B cell (primary cell): ENCODE measurements at regions of chr20 and their contacts with region 1.

Region 1: DNA sequence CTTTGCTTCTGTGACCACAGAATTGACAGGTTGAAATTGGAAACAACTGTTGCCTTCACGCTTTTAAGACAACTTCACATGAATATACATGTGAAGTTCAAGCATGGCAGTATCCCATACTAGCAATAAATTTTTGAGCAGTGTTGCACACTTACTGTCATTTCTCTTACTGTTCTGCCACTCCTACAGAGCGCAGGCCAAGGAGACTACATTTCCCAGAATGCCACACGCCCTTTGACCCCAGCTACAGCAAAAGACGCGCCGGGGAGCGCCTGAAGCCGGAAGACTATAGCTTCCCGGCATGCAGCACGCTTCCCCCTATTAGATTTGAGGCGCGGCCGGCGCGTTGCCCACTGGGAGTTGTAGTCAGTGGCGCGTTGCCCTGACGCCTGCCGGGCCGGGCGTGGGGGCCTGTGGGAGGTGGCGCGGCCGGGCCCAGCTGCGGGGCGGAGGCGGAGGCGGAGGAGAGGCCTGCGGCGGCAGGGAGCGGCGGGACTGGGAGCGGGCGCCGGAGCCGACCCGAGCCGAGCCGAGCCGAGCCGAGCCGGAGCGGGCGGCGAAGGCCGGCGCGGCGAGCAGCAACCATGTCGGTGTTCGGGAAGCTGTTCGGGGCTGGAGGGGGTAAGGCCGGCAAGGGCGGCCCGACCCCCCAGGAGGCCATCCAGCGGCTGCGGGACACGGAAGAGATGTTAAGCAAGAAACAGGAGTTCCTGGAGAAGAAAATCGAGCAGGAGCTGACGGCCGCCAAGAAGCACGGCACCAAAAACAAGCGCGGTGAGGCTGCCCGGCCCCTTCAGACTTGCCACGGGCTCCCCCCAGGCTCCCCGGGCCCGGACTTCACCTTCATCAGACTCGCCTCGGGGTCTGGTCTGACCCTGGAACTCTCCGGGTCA is at the start of gene CHMP4B:
- DNase-seq: peak; percentile 98
- ATAC-seq: peak; percentile 96
- H3K4me3 ChIP-seq: peak within 1 kb of the TSS; percentile 86 to 97 (median 92)
- H3K4me3 Mint-ChIP-seq: peak within 1 kb of the TSS; percentile 97
- H3K27ac ChIP-seq: peak within 1 kb of the TSS; percentile 65 to 90
- H3K27ac Mint-ChIP-seq: peak within 1 kb of the TSS; percentile 96
- H3K4me1 ChIP-seq: peaks cover 23 to 30% of the 10 kb centered on the region in 2 donors
- H3K4me1 Mint-ChIP-seq: peaks cover 45% of the 10 kb centered on the region
- H3K27me3 ChIP-seq: no peaks in the 10 kb centered on the region
- H3K27me3 Mint-ChIP-seq: peaks cover 4% of the 10 kb centered on the region
- CTCF ChIP-seq: no peak
- total RNA-seq, gene CHMP4B: 81.6 and 83.9 TPM in 2 replicates

Region 2: DNA sequence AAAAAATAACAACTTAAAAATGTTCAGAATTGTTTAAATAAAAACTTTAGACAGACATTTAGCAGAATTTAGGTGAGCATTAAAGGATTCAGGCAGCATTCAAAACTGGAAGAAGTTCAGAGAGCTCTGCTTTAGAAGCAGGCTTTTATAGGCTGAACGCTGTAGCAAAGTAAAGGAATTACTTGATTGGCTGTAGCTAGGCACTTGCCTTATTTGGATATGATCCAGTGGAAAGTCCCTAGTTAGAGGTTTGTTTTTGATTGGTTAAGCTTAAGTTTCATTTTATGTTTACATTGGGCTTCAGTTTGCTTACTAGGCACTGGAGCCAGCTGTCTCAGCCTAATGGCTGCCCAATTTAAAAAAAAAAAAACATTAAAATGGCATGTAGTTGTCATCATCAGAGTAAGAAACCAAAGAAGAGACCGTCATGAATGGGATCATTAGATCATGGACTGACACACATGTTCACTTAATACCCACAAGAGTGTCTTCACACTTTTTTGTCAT is 256.2 kb before region 1 on chr20:
- CTCF ChIA-PET with region 1: no interaction called
- POLR2A ChIA-PET with region 1: no interaction called
- intact Hi-C with region 1: loop called (anchors 10 kb)
- DNase-seq: peak; percentile 90
- ATAC-seq: peak; percentile 96
- H3K4me3 ChIP-seq: peak overlapping the region in 2 of 5 experiments; percentile 24 to 40
- H3K4me3 Mint-ChIP-seq: peak overlapping the region; percentile 79
- H3K27ac ChIP-seq: peak overlapping the region; percentile 92 to 97
- H3K27ac Mint-ChIP-seq: peak overlapping the region; percentile 96
- H3K4me1 ChIP-seq: peaks cover 28 to 31% of the 10 kb centered on the region in 2 donors
- H3K4me1 Mint-ChIP-seq: peaks cover 34% of the 10 kb centered on the region
- H3K27me3 ChIP-seq: no peaks in the 10 kb centered on the region
- H3K27me3 Mint-ChIP-seq: no peaks in the 10 kb centered on the region
- CTCF ChIP-seq: no peak

Region 3: DNA sequence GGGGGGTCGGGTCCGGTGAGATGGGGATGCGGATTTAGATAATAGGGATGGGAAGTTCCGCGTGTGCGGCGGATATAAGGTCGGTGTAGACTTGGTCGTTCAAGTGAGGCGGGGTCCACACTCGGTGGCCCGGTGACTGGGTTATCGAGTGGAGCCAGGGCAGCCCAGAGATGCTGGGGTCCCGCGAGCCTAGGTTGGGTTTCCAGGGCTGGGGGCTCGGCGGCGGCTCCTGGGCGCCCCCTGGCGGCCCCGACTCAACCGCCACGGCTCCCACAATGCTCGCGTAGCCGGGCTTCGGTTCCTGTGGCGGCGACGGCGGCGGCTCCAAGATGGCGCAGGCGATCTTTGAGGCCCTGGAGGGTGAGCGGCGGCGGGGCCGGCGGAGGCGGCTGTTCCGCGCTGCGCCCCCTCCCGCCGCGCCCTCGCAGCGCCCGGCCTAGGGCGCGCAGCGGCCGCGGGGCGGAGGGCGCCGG is 79.4 kb before region 1 on chr20 and contains the start of gene ZNF341:
- CTCF ChIA-PET with region 1: interaction called, 21 read pairs
- POLR2A ChIA-PET with region 1: interaction called, 10 read pairs
- intact Hi-C with region 1: loop called (anchors 1 kb)
- DNase-seq: no peak
- ATAC-seq: peak; percentile 74
- H3K4me3 ChIP-seq: peak within 1 kb of the TSS; percentile 63 to 84 (median 68)
- H3K4me3 Mint-ChIP-seq: peak within 1 kb of the TSS; percentile 98
- H3K27ac ChIP-seq: peak within 1 kb of the TSS; percentile 61 to 81
- H3K27ac Mint-ChIP-seq: peak within 1 kb of the TSS; percentile 96
- H3K4me1 ChIP-seq: peaks cover 20 to 29% of the 10 kb centered on the region in 2 donors
- H3K4me1 Mint-ChIP-seq: peaks cover 24% of the 10 kb centered on the region
- H3K27me3 ChIP-seq: no peaks in the 10 kb centered on the region
- H3K27me3 Mint-ChIP-seq: no peaks in the 10 kb centered on the region
- CTCF ChIP-seq: peak; percentile 84
- total RNA-seq, gene ZNF341: 9.1 and 9.9 TPM in 2 replicates

Region 4: DNA sequence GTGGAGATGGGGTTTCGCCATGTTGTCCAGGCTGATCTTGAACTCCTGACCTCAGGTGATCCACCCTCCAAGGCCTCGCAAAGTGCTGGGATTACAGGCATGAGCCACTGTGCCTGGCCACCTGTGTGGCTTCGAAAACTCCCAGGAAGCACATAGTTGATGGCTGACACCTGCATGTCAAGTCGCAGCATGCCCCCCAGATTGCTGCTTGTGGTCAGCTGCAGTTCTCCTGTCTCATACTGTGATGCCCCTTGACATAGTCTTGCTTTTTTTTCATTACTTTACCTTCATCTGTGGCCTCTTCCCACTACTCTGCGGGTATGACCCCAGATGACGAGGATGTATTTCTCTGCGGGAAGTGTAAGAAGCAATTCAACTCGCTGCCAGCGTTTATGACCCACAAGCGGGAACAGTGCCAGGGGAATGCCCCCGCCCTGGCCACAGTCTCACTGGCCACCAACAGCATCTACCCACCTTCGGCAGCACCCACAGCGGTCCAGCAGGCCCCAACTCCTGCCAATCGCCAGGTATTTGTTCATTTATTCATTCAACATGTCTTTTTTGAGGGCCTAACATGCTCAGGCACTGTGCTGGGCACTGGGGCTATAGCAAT is 66.3 kb before region 1 on chr20:
- CTCF ChIA-PET with region 1: no interaction called
- POLR2A ChIA-PET with region 1: no interaction called
- intact Hi-C with region 1: no loop called
- DNase-seq: no peak
- ATAC-seq: no peak
- H3K4me3 ChIP-seq: no peak overlapping the region
- H3K4me3 Mint-ChIP-seq: no peak overlapping the region
- H3K27ac ChIP-seq: no peak overlapping the region
- H3K27ac Mint-ChIP-seq: no peak overlapping the region
- H3K4me1 ChIP-seq: no peaks in the 10 kb centered on the region
- H3K4me1 Mint-ChIP-seq: peaks cover 5% of the 10 kb centered on the region
- H3K27me3 ChIP-seq: no peaks in the 10 kb centered on the region
- H3K27me3 Mint-ChIP-seq: no peaks in the 10 kb centered on the region
- CTCF ChIP-seq: no peak

Region 5: DNA sequence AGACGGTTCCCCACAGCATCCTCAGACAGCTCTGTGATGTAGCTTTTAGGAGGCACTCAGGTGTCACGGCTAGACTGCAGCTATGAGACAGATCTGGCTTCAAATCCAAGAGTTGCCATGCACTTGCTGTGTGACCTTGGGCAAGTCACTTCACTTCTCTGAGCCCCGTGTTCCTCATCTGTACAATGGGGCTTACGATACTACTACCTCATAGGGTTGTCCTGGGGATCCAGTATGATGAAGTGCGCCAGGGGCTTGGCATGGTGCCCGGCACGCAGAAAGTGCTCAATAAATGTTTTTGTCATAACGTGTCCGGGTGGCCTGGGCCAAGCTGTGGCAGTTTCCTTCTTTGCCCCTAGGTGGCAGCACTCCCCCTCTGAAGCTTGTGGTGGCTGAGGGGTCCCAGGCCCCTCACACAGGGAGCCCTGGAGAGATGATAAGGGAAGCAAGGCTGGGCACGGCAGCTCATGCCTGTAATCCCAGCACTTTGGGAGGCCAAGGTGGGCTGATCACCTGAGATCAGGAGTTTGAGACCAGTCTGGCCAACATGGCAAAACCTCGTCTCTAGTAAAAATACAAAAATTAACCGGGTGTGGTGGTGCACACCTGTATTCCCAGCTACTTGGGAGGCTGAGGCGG is 19.1 kb before region 1 on chr20:
- CTCF ChIA-PET with region 1: interaction called, 11 read pairs
- POLR2A ChIA-PET with region 1: no interaction called
- intact Hi-C with region 1: no loop called
- DNase-seq: peak; percentile 64
- ATAC-seq: peak; percentile 57
- H3K4me3 ChIP-seq: no peak overlapping the region
- H3K4me3 Mint-ChIP-seq: no peak overlapping the region
- H3K27ac ChIP-seq: no peak overlapping the region
- H3K27ac Mint-ChIP-seq: no peak overlapping the region
- H3K4me1 ChIP-seq: peaks cover 6 to 11% of the 10 kb centered on the region in 2 donors
- H3K4me1 Mint-ChIP-seq: peaks cover 18% of the 10 kb centered on the region
- H3K27me3 ChIP-seq: no peaks in the 10 kb centered on the region
- H3K27me3 Mint-ChIP-seq: no peaks in the 10 kb centered on the region
- CTCF ChIP-seq: peak; percentile 82

Region 6: GRCh38 chr20:34676642-34677373 is 865.7 kb after region 1 on chr20 and contains the start of gene PIGU:
- CTCF ChIA-PET with region 1: no interaction called
- POLR2A ChIA-PET with region 1: no interaction called
- intact Hi-C with region 1: loop called (anchors 2 kb)
- DNase-seq: peak; percentile 98
- ATAC-seq: peak; percentile 93
- H3K4me3 ChIP-seq: peak within 1 kb of the TSS; percentile 74 to 96 (median 78)
- H3K4me3 Mint-ChIP-seq: peak within 1 kb of the TSS; percentile 98
- H3K27ac ChIP-seq: peak within 1 kb of the TSS; percentile 74 to 86
- H3K27ac Mint-ChIP-seq: peak within 1 kb of the TSS; percentile 95
- H3K4me1 ChIP-seq: peaks cover 11 to 12% of the 10 kb centered on the region in 2 donors
- H3K4me1 Mint-ChIP-seq: peaks cover 17% of the 10 kb centered on the region
- H3K27me3 ChIP-seq: no peaks in the 10 kb centered on the region
- H3K27me3 Mint-ChIP-seq: no peaks in the 10 kb centered on the region
- CTCF ChIP-seq: no peak
- total RNA-seq, gene PIGU: 15.4 and 19.3 TPM in 2 replicates